Activated CD4-positive, alpha-beta T cell treated with anti-CD3 and anti-CD28 coated beads, Interleukin-2, amount 10 ng/mL, durations not matched to agents 24 days and 14 days (primary cell): ENCODE measurements at regions of chr2 and their contacts with region 1.

Region 1: GRCh38 chr2:210195101-210195852 is 24.1 kb upstream of the KANSL1L start:
- DNase-seq: peak; percentile 69
- H3K4me3 Mint-ChIP-seq: no peak overlapping the region
- H3K27ac Mint-ChIP-seq: no peak overlapping the region
- H3K4me1 Mint-ChIP-seq: peaks cover 3% of the 10 kb centered on the region
- H3K27me3 Mint-ChIP-seq: peaks cover 3% of the 10 kb centered on the region

Region 2: GRCh38 chr2:208392300-208393080 is 1802.8 kb before region 1 on chr2:
- intact Hi-C with region 1: loop called (anchors 5 kb)
- DNase-seq: no peak
- H3K4me3 Mint-ChIP-seq: no peak overlapping the region
- H3K27ac Mint-ChIP-seq: no peak overlapping the region
- H3K4me1 Mint-ChIP-seq: peaks cover 5% of the 10 kb centered on the region
- H3K27me3 Mint-ChIP-seq: peaks cover 7% of the 10 kb centered on the region

Region 3: DNA sequence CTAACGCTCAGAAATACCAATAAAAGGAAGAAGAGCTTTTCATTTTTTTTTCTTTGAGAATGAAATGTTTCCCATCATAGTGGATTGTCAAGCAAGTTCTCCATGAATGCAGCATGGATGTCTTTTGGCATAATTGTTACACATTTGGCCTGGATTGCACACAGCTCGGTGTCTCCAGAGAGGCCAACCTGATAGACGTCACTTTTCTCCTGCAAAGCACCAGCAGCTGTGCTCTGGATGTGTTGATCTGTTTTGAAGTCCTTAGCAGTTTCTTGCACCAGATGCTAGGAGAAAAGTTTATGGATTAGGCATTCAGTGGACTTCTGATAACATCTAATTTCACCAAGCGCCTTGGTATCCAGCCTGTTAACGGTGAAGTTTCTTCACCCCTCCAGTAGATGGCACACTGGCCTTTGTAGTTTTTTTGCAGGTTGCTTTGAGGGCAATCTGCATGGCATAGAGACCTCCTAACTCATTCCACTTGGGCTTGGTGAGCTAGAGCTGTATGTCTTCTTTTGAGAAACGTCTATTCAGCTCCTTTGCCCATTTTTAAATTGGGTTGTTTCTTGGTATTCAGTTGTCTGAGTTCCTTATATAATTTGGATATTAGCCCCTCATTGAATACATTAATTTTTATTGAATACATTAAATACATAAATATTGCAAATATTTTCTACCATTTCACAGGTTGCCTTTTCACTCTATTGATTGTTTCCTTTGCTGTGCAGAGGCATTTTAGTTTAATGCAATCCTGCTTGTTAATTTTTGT is 1728.9 kb before region 1 on chr2:
- intact Hi-C with region 1: loop called (anchors 10 kb)
- DNase-seq: peak; percentile 65
- H3K4me3 Mint-ChIP-seq: no peak overlapping the region
- H3K27ac Mint-ChIP-seq: no peak overlapping the region
- H3K4me1 Mint-ChIP-seq: no peaks in the 10 kb centered on the region
- H3K27me3 Mint-ChIP-seq: peaks cover 4% of the 10 kb centered on the region

Region 4: DNA sequence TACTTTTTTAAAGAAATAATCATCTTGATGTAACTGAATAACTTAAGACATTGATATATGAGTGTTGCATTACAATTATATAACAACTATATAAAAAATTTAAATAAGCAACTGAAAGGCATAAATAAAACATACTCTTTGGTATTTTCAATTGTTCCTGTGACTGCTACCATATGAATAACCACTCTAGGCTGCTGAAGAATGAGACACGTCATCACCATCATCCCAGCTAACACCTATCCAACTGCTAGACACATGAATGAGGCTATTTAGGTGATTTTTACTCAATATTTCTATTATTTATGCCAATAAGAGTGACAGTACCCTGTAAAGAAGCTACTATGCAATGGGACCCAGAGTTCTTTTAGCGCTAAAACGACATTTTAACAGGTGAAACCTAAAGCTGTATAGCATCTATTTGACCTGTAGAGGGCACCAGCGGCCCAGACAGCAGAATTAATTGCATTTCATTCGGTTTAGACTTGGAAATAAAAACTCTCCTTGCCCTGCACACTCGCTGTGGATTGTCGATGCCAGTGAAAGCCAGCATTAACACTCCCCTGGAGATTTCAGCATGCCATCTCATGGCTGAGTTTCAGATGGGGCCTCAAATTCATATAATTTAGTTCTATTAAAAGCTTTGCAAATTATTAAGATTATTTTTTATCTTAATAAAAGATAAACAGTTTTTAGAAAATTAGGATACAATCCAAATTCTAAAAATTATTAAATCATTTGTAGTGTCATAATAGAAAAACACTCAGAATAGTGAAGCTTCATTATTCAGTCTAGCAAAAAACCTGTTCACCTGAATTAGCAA is 860.9 kb before region 1 on chr2:
- intact Hi-C with region 1: loop called (anchors 2 kb)
- DNase-seq: peak; percentile 78
- H3K4me3 Mint-ChIP-seq: no peak overlapping the region
- H3K27ac Mint-ChIP-seq: no peak overlapping the region
- H3K4me1 Mint-ChIP-seq: no peaks in the 10 kb centered on the region
- H3K27me3 Mint-ChIP-seq: no peaks in the 10 kb centered on the region

Region 5: GRCh38 chr2:209423562-209424198 is 771.6 kb before region 1 on chr2 and contains the start of gene MAP2:
- intact Hi-C with region 1: loop called (anchors 10 kb)
- DNase-seq: peak; percentile 91
- H3K4me3 Mint-ChIP-seq: peak within 1 kb of the TSS; percentile 81
- H3K27ac Mint-ChIP-seq: peak within 1 kb of the TSS; percentile 43
- H3K4me1 Mint-ChIP-seq: peaks cover 10% of the 10 kb centered on the region
- H3K27me3 Mint-ChIP-seq: peaks cover 36% of the 10 kb centered on the region
- total RNA-seq, gene MAP2: not detected in 2 replicates

Region 6: DNA sequence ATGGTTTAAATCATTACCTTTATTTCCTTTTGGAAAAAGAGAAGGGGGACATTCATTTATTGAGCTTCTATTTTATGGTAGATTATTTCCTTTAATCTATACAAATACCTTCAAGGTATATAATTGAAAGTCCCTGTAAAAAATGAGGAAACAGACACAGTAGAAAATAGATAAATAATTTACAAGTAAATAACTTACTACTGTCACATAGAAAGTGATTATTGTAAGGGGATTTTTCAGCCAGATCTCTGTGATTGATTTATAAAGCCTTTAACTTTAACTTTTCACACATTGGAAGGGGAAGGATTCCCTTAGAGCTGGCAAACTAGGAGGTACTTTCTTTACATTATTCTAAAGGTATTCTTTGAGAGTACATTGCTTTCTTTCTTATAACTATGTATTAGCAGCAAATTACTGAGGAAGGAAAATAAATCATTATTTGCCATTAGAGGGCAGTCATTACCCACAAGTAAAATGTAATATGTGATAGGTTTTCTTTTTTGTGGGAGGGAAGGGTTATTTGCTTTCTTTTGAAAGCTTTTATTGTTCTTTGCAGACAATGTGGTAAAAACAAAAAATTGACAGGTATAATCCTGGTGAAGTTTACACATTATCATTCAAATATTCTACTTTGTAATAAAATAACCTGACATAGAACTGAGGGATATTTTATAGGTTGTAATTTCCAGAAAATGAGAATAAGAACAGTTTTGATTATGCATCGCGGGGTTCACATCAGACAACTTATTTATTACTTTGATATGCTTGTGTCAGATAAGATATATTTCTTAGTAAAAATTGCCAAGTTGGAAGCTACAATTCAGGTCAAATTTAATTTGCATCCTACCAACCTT is 217.7 kb before region 1 on chr2:
- intact Hi-C with region 1: loop called (anchors 1 kb)
- DNase-seq: no peak
- H3K4me3 Mint-ChIP-seq: no peak overlapping the region
- H3K27ac Mint-ChIP-seq: no peak overlapping the region
- H3K4me1 Mint-ChIP-seq: no peaks in the 10 kb centered on the region
- H3K27me3 Mint-ChIP-seq: peaks cover 10% of the 10 kb centered on the region

Region 7: DNA sequence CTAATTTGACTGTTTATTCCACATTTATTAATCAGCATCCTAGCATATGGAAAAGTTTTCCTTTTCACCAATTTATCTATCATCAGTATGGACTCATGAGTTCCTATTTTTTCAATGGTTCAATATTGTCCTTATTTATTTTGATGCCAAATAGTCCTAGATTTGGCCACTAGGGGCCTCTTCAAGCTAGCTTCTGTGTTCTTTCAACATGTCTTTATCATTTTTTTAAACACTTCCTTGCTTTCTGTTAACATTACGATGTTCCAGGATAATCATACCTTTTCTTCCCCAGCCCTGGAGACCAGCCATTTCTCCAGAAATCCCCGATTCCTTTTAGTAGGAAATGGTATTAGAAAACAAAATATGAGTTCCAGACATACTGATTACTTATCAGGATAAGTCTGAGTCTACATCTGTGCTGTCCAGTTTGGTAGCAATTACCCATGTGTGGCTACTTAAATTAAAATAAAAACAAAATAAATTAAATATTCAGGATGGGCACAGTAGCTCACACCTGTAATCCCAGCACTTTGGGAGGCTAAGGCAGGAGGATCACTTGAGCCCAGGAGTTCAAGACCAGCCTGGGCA is 122.3 kb before region 1 on chr2:
- intact Hi-C with region 1: loop called (anchors 2 kb)
- DNase-seq: no peak
- H3K4me3 Mint-ChIP-seq: no peak overlapping the region
- H3K27ac Mint-ChIP-seq: no peak overlapping the region
- H3K4me1 Mint-ChIP-seq: no peaks in the 10 kb centered on the region
- H3K27me3 Mint-ChIP-seq: no peaks in the 10 kb centered on the region